ENCODE measurements at regions of chr3 and their contacts with region 1.

Region 1: GRCh38 chr3:169149349-169149890 is 514.1 kb downstream of the MECOM start:
- DNase-seq: peak; percentile 81
- ATAC-seq: peak; percentile 96
- H3K4me3 Mint-ChIP-seq: no peak overlapping the region
- H3K27ac Mint-ChIP-seq: no peak overlapping the region
- H3K4me1 Mint-ChIP-seq: peaks cover 16% of the 10 kb centered on the region
- H3K27me3 Mint-ChIP-seq: peaks cover 68% of the 10 kb centered on the region

Region 2: GRCh38 chr3:169122416-169122815 is 27.0 kb before region 1 on chr3:
- CTCF ChIA-PET with region 1: no interaction called
- DNase-seq: no peak
- ATAC-seq: no peak
- H3K4me3 Mint-ChIP-seq: no peak overlapping the region
- H3K27ac Mint-ChIP-seq: no peak overlapping the region
- H3K4me1 Mint-ChIP-seq: no peaks in the 10 kb centered on the region
- H3K27me3 Mint-ChIP-seq: no peaks in the 10 kb centered on the region

Region 3: GRCh38 chr3:169661361-169662131 is 512.1 kb after region 1 on chr3:
- CTCF ChIA-PET with region 1: interaction called, 73 read pairs
- DNase-seq: no peak
- ATAC-seq: peak; percentile 37
- H3K4me3 Mint-ChIP-seq: peak overlapping the region; percentile 77
- H3K27ac Mint-ChIP-seq: peak overlapping the region; percentile 28
- H3K4me1 Mint-ChIP-seq: peaks cover 39% of the 10 kb centered on the region
- H3K27me3 Mint-ChIP-seq: peaks cover 90% of the 10 kb centered on the region

Region 4: DNA sequence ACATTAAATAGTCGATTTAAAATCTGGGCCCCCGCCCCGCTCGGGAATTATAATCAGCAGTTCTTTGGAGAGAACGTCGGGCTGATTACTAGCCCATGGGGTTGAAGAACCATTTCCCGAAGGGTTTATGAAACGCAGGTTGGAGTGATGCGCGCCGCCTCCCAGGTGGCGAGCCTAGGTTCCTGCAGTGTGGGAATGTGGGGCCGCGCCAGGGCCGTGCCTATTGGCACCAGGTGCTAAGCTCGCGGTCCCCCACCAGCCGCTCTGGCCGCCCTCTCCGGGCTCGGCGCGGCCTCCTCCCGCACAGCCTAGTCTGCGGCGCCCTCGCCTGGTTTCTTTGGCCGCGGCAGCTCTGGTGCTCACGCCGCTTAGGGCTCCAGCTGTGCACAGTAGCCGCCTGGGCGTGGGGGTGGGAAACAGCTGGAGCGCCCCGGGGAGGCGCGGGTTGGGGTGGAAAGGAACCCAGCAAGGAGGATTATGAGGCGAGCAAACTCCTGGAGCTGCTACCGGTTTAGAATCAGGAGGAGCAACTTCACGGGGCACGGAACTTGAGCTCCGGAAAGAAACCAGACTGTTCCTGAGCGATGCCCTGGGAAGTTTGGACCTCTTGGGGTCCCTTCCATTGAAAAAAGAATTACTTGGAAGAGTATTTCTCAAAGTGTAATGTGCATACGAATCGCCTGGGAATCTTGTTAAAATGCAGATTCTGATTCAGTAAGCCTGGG is 519.7 kb after region 1 on chr3:
- CTCF ChIA-PET with region 1: interaction called, 73 read pairs
- DNase-seq: peak; percentile 64
- ATAC-seq: peak; percentile 84
- H3K4me3 Mint-ChIP-seq: peak overlapping the region; percentile 44
- H3K27ac Mint-ChIP-seq: no peak overlapping the region
- H3K4me1 Mint-ChIP-seq: peaks cover 19% of the 10 kb centered on the region
- H3K27me3 Mint-ChIP-seq: peaks cover 94% of the 10 kb centered on the region

Region 5: DNA sequence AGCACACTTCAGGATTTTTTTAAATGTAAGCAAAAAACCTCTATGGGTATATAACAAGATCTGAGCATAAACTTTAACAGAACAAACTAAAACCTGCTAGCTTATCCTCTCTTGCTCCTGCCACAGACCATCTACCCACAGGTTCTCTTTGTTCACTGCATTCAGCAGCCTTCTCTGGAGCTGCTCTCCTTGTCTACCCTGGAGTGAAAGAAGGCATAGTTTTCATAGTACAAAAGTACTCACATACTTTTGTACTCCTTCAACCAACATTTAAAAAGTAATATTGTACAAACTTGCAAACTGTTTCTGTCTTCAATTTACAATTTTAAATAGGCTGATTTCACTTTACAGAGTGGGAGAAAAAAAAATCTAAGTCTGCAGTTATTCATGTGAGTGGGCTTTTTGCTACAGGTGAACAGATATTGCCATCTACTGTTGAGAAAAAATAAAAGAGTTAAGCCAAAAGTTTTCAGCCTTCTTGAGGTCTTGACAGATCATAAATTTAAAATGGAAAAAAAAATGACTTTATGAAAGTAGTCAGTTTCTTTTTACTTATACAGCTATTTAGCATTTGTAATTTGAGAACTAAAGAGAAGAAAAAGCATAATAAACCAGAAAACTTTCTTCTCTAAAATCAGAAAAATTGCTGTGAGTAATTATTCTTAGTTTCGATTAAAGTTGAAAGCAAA is 595.1 kb after region 1 on chr3:
- CTCF ChIA-PET with region 1: interaction called, 12 read pairs
- DNase-seq: no peak
- ATAC-seq: no peak
- H3K4me3 Mint-ChIP-seq: no peak overlapping the region
- H3K27ac Mint-ChIP-seq: no peak overlapping the region
- H3K4me1 Mint-ChIP-seq: peaks cover 7% of the 10 kb centered on the region
- H3K27me3 Mint-ChIP-seq: peaks cover 25% of the 10 kb centered on the region